Spleen (tissue), 13 donors: ENCODE measurements at regions of chr11 and their contacts with region 1.

Region 1: GRCh38 chr11:33172996-33173395 is 11.7 kb upstream of the CSTF3 start:
- DNase-seq: no peak
- H3K4me3 ChIP-seq: no peak overlapping the region
- H3K27ac ChIP-seq: no peak overlapping the region
- H3K4me1 ChIP-seq: peaks cover 0 to 7% (median 0%) of the 10 kb centered on the region in 6 donors
- H3K27me3 ChIP-seq: no peaks in the 10 kb centered on the region
- CTCF ChIP-seq: no peak
- POLR2A ChIP-seq: no peak

Region 2: GRCh38 chr11:32809313-32809712 is 363.7 kb before region 1 on chr11:
- intact Hi-C with region 1: no loop called
- DNase-seq: peak; percentile 79
- H3K4me3 ChIP-seq: no peak overlapping the region
- H3K27ac ChIP-seq: no peak overlapping the region
- H3K4me1 ChIP-seq: no peaks in the 10 kb centered on the region
- H3K27me3 ChIP-seq: no peaks in the 10 kb centered on the region
- CTCF ChIP-seq: peak in 10 of 11 experiments; percentile 22 to 69 (median 58)
- POLR2A ChIP-seq: no peak

Region 3: GRCh38 chr11:33257897-33258630 is 85.1 kb after region 1 on chr11:
- intact Hi-C with region 1: loop called (anchors 10 kb)
- DNase-seq: peak; percentile 95
- H3K4me3 ChIP-seq: peak overlapping the region; percentile 64 to 98 (median 75)
- H3K27ac ChIP-seq: peak overlapping the region; percentile 99 to 100 (median 100)
- H3K4me1 ChIP-seq: peaks cover 13 to 61% (median 48%) of the 10 kb centered on the region in 6 donors
- H3K27me3 ChIP-seq: no peaks in the 10 kb centered on the region
- CTCF ChIP-seq: peak in 9 of 11 experiments; percentile 32 to 54 (median 50)
- POLR2A ChIP-seq: peak; percentile 3 to 75 (median 56)

Region 4: GRCh38 chr11:33324302-33324985 is 151.4 kb after region 1 on chr11:
- intact Hi-C with region 1: loop called (anchors 5 kb)
- DNase-seq: no peak
- H3K4me3 ChIP-seq: no peak overlapping the region
- H3K27ac ChIP-seq: peak overlapping the region in 3 of 8 donors; percentile 28 to 39 (median 34)
- H3K4me1 ChIP-seq: peaks cover 20 to 100% (median 66%) of the 10 kb centered on the region in 6 donors
- H3K27me3 ChIP-seq: no peaks in the 10 kb centered on the region
- CTCF ChIP-seq: no peak
- POLR2A ChIP-seq: no peak